AG04450 (cell line): ENCODE measurements at regions of chr11 and their contacts with region 1.

Region 1: DNA sequence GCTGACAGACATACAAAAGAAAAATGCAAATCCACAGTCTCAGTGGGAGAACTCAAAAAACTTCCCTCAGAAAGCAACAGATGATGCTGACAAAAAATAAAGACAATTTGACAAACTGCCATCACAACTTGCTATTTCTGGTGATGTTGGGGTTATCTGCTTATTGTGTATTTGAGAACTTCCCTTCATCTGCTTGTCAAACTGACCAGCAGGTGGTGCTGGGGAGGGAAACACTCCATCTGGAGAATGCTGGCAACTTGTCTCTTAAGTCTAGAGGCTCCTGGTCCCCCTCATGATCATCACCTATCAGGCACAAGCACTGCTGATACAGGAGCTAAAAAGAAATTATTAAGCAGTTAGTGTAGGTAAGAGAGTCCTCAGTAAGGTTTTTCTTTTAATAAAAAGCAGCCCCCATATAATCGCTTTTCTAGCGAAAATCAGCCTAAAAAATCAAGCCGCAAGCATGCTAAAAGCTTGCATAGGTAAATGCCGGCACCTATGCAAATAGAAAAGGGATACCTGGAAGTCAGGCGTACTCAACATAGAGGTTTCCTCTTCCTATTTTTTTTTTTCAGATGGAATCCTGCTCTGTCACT is 9.8 kb upstream of the FAM111B start:
- DNase-seq: peak; percentile 46
- H3K4me3 ChIP-seq: no peak overlapping the region
- H3K27ac ChIP-seq: no peak overlapping the region
- H3K27me3 ChIP-seq: peaks cover 13% of the 10 kb centered on the region
- CTCF ChIP-seq: peak; percentile 78

Region 2: DNA sequence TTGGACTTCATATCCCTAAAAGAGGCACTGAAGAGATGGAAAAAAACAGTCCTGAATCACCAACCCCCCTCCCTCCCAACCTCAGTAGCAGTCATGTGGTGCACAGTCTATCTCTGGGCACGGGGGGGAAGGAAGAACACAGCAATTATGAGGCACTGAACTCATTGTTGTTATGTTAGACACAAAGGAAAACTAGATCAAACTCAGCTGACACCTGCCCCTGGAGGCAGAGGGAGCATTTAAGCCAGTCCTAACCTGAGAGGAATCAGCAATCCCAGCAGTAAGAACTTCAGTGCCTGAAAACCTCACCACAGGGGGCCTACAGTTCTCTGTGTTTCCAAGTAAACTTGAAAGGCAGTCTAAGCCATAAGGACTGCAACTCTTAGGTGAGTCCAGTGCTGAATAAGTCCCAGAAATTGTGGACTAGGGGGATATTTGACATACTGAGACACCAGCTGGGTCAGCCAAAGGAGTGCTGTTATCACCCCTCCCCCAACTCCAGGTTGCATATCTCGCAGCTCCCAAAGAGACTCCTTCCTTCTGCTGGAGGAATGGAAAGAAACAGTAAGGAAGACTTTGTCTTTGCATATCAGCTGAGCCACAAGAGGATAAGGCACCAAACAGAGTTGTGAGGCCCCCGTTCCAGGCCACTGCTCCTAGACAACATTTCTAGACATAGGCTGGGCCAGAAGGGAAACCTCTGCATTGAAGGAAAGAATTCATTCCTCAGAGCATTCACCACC is 85.4 kb before region 1 on chr11:
- CTCF ChIA-PET with region 1: no interaction called
- POLR2A ChIA-PET with region 1: no interaction called
- DNase-seq: no peak
- H3K4me3 ChIP-seq: no peak overlapping the region
- H3K27ac ChIP-seq: no peak overlapping the region
- H3K27me3 ChIP-seq: peaks cover 2% of the 10 kb centered on the region
- CTCF ChIP-seq: no peak

Region 3: GRCh38 chr11:59142530-59143507 is 45.6 kb after region 1 on chr11 and contains the start of gene FAM111A:
- CTCF ChIA-PET with region 1: interaction called, 13 read pairs
- POLR2A ChIA-PET with region 1: no interaction called
- DNase-seq: peak; percentile 65
- H3K4me3 ChIP-seq: peak within 1 kb of the TSS; percentile 90
- H3K27ac ChIP-seq: peak within 1 kb of the TSS; percentile 97
- H3K27me3 ChIP-seq: no peaks in the 10 kb centered on the region
- CTCF ChIP-seq: peak; percentile 43
- polyA plus RNA-seq, gene FAM111A: 20.6 and 23.1 TPM in 2 replicates